Mammary epithelial cell (primary cell): ENCODE measurements at regions of chr18 and their contacts with region 1.

Region 1: DNA sequence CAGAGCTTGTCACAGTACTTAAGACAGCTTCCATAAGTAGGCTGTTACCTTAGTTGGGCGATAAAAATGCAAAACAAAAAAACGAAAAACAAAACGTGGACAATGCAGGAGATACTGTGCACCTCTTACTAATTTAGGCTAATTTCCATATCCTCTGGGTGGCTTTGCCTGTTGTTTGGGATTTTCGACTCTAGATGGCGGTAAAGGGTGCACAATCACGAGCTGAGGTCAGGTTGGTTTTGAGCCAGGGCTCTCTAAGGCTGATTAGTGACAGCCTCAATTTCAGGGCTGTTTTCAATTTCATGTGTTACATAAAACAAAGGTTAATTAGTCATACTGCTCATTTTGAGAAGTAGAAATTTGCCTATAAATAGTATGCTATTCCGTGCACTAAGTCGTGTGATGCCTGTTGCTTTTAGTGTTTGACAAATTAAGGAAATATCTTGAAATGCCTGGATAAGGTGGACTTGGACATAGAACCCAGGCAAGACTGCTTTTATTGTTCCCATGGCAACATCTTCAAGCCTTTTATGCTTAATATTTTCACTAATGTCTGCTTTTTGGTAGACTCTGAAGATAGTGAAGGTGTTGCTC is 493.1 kb downstream of the SOCS6 start:
- DNase-seq: peak; percentile 23
- H3K4me3 ChIP-seq: no peak overlapping the region
- H3K27ac ChIP-seq: no peak overlapping the region
- H3K4me1 ChIP-seq: no peaks in the 10 kb centered on the region
- H3K27me3 ChIP-seq: no peaks in the 10 kb centered on the region
- CTCF ChIP-seq: peak; percentile 80 to 82

Region 2: DNA sequence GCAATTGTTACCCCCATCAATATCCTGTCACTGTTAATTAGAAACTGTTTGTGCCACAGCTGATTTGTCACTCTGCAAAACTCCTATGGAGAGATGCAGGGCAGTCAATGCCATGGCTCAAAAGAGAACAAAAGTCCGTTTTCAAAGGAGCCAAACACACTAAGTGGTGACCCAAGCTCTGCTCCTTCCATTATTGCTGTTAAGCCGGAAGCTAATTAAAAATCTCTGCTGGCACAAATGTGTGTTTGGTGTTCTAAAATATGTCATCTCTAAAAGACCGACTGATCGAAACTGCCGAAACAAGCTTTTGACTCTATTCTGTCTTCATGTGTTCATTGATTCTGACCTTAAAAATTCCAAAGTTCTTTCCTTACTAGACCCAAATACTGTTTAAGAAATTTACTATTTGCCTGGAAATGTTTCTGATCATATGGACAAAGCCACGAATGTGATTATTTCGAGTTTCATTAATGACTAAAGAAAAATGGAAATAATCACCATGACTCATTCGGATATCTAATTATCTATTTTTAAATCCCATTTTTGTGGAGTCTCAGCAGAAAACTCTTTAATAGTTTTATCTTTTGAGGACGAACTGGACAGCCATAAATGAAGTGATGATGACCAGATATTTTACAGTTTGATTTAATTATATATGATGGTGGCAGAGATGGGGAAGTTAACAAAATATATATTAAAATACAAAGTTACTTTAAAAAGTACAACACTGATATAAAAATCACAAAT is 205.5 kb before region 1 on chr18:
- CTCF ChIA-PET with region 1: no interaction called
- dilution Hi-C with region 1: no loop called
- in situ Hi-C with region 1: no loop called
- intact Hi-C with region 1: no loop called
- DNase-seq: no peak
- H3K4me3 ChIP-seq: no peak overlapping the region
- H3K27ac ChIP-seq: no peak overlapping the region
- H3K4me1 ChIP-seq: no peaks in the 10 kb centered on the region
- H3K27me3 ChIP-seq: no peaks in the 10 kb centered on the region
- CTCF ChIP-seq: no peak

Region 3: DNA sequence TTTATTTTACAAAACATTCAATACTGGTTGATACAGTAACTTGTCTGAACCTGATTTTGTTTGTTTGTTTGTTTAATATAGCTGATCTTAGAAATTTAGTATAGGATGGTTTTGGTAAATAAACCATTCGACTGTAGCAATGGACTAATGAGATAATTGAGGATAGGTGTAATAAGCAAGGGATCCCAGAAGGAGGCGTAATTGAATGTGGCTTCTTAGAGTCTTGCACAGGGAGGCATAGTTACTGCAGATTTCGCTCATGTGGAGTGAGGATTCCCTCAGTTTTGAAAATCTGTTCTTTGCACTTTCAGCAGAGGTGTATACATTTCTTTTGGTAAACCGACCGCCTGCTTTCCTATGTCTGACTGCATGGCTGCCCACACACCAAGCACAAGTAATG is 216.5 kb after region 1 on chr18:
- CTCF ChIA-PET with region 1: no interaction called
- dilution Hi-C with region 1: no loop called
- in situ Hi-C with region 1: no loop called
- intact Hi-C with region 1: no loop called
- DNase-seq: no peak
- H3K4me3 ChIP-seq: no peak overlapping the region
- H3K27ac ChIP-seq: no peak overlapping the region
- H3K4me1 ChIP-seq: no peaks in the 10 kb centered on the region
- H3K27me3 ChIP-seq: no peaks in the 10 kb centered on the region
- CTCF ChIP-seq: no peak

Region 4: GRCh38 chr18:72013427-72013850 is 1231.5 kb after region 1 on chr18:
- CTCF ChIA-PET with region 1: no interaction called
- dilution Hi-C with region 1: no loop called
- in situ Hi-C with region 1: no loop called
- intact Hi-C with region 1: no loop called
- DNase-seq: no peak
- H3K4me3 ChIP-seq: no peak overlapping the region
- H3K27ac ChIP-seq: no peak overlapping the region
- H3K4me1 ChIP-seq: no peaks in the 10 kb centered on the region
- H3K27me3 ChIP-seq: no peaks in the 10 kb centered on the region
- CTCF ChIP-seq: no peak

Region 5: DNA sequence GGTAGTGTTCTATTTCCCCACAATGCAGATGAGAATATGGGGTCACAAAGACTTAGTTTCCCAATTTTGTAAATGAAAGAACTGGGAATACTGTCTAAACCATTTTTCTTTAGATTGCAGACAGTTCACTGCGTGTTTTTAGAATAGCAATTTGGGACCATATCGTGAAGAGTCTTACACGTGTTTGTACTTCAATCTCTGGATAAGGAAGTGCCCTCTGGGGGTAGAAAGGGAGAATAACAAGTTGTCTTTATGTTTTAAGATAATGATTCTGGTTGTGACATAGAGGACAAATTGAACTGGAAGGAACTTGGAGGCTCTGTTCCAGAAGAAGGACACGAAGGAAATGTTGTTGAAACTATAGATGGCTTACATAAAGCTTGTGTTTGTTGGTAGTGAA is 1304.5 kb after region 1 on chr18:
- CTCF ChIA-PET with region 1: no interaction called
- dilution Hi-C with region 1: no loop called
- in situ Hi-C with region 1: no loop called
- intact Hi-C with region 1: loop called (anchors 5 kb)
- DNase-seq: no peak
- H3K4me3 ChIP-seq: no peak overlapping the region
- H3K27ac ChIP-seq: no peak overlapping the region
- H3K4me1 ChIP-seq: no peaks in the 10 kb centered on the region
- H3K27me3 ChIP-seq: no peaks in the 10 kb centered on the region
- CTCF ChIP-seq: peak in 1 of 2 donors; percentile 29

Region 6: GRCh38 chr18:72544092-72544886 is 1762.3 kb after region 1 on chr18 and contains the start of gene CBLN2:
- CTCF ChIA-PET with region 1: interaction called, 15 read pairs
- dilution Hi-C with region 1: no loop called
- in situ Hi-C with region 1: no loop called
- intact Hi-C with region 1: loop called (anchors 1 kb)
- DNase-seq: peak; percentile 46
- H3K4me3 ChIP-seq: no peak within 1 kb of the TSS
- H3K27ac ChIP-seq: no peak within 1 kb of the TSS
- H3K4me1 ChIP-seq: no peaks in the 10 kb centered on the region
- H3K27me3 ChIP-seq: peaks cover 26% of the 10 kb centered on the region
- CTCF ChIP-seq: peak; percentile 40 to 79
- total RNA-seq, gene CBLN2: not detected